ENCODE measurements at regions of chr19 and their contacts with region 1.

Region 1: DNA sequence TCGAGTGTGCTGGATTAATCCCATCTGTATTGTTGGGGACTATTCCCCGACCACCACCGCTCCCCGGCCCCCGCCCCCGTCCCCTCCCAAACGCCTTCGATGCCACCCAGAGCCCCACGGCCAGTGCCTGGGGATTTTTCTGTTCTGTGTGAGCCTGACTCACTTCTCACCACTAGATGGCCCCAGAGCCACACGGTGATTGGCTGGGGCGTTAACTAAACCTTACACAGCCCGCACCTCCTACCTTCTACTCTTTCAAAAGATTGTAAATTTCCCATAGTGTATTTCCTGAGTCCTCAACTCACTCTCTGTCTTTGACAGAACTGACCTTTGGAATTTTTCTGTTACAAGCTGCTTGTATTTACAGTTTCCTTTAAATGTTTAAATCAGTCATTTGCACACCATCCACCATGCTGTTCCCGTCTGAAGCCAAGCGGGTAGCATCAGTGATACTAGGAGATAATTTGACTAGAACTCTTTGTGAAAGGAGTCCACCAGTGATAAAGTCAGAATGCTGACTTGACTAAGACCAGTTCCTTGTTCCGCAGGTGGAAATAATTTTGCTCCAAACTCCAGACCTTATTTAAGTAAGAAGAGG is 61.4 kb downstream of the RFX2 start:
- DNase-seq: peak; percentile 70 to 85 (median 72)
- ATAC-seq: peak; percentile 91 to 98 (median 96)
- H3K4me3 ChIP-seq: peak overlapping the region in 1 of 12 donors; percentile 3
- H3K27ac ChIP-seq: peak overlapping the region in 1 of 12 donors; percentile 29
- H3K4me1 ChIP-seq: peaks cover 0 to 19% (median 9%) of the 10 kb centered on the region in 12 donors
- H3K27me3 ChIP-seq: no peaks in the 10 kb centered on the region
- CTCF ChIP-seq: peak; percentile 86 to 93 (median 90)
- POLR2A ChIP-seq: no peak

Region 2: DNA sequence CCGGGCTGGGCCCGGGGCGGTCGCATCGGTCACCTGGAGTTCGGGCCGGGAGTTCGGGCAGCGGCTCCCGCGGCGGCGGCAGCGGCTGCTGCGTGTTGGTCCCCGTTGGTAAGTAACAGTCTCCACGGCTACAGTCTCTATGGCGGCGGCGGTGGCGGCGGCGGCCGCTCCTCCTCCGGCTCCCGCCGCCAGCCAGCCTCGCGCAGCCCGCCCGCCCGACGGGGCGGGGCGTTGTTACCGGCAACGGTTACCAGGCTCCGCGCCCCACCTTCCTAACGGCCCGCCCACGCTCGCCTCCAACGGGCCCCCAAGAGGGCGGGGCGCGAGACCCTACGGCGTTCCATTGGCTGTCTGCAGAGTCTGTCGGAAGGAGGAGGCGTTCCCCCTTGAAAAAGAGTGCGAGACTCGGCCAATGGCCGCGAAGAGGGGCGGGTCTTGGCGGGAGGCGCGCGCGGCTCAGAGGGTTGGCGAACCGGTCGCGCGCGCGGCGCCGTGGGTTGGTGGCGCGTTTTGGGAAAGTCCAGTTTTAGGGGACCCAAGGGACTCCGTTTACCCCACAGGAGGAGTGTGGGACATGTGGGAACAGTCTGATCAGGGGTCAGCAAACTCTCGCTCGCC is 61.6 kb after region 1 on chr19 and contains the start of gene RFX2:
- intact Hi-C with region 1: loop called in 1 of 10 experiments (anchors 5 kb)
- DNase-seq: peak; percentile 99
- ATAC-seq: peak; percentile 99 to 100 (median 99)
- H3K4me3 ChIP-seq: peak within 1 kb of the TSS; percentile 48 to 84 (median 70)
- H3K27ac ChIP-seq: peak within 1 kb of the TSS; percentile 17 to 93 (median 84)
- H3K4me1 ChIP-seq: peaks cover 0 to 33% (median 12%) of the 10 kb centered on the region in 12 donors
- H3K27me3 ChIP-seq: no peaks in the 10 kb centered on the region
- CTCF ChIP-seq: peak in 1 of 12 donors; percentile 10
- POLR2A ChIP-seq: peak in 1 of 2 donors; percentile 70
- total RNA-seq, gene RFX2: 2.8 to 20.0 (median 5.8) TPM

Region 3: DNA sequence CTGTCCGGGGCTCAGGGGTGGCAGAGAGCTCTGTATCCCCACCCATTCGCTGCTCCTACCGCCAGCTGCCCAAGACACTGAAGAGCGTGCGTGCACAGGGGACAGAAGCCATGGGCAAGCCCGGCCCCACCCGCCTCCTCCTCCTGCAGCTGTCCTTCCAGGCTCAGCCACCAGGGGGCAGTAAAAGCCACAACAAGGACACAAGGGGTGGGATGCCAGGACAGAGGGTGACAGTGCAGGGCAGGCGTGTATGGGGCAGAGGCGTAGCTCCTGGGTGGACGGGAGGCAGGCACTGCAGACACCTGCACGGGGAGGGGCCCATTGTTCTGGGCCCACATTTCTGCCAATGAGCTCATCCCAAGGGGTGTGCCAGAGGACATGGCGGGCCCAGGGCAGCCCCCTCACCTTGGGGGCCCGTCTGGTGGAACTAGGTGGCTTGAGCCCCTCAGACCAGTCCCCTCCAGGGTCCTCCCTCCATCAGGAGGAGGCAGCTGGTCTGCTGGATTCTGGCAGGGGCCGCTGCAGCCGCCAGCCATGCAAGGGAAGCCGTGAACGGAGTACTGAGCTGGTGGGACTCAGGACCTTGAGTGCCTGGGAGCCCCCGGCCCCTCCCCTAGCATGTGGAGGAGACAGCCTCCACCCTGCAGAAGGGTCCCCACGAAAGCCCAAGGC is 169.7 kb after region 1 on chr19:
- intact Hi-C with region 1: loop called in 1 of 10 experiments (anchors 1 kb)
- DNase-seq: peak; percentile 84 to 92 (median 89)
- ATAC-seq: peak; percentile 66 to 86 (median 72)
- H3K4me3 ChIP-seq: no peak overlapping the region
- H3K27ac ChIP-seq: peak overlapping the region in 4 of 12 donors; percentile 8 to 41 (median 12)
- H3K4me1 ChIP-seq: peaks cover 8 to 63% (median 45%) of the 10 kb centered on the region in 12 donors
- H3K27me3 ChIP-seq: no peaks in the 10 kb centered on the region
- CTCF ChIP-seq: peak; percentile 93 to 99 (median 96)
- POLR2A ChIP-seq: no peak

Region 4: GRCh38 chr19:6292006-6292405 is 243.1 kb after region 1 on chr19:
- intact Hi-C with region 1: loop called in 4 of 10 experiments (anchors 5 to 10 kb)
- DNase-seq: no peak
- ATAC-seq: no peak
- H3K4me3 ChIP-seq: no peak overlapping the region
- H3K27ac ChIP-seq: no peak overlapping the region
- H3K4me1 ChIP-seq: no peaks in the 10 kb centered on the region
- H3K27me3 ChIP-seq: no peaks in the 10 kb centered on the region
- CTCF ChIP-seq: no peak
- POLR2A ChIP-seq: no peak

Region 5: GRCh38 chr19:6312018-6312417 is 263.1 kb after region 1 on chr19:
- intact Hi-C with region 1: loop called in 1 of 10 experiments (anchors 10 kb)
- DNase-seq: no peak
- ATAC-seq: no peak
- H3K4me3 ChIP-seq: no peak overlapping the region
- H3K27ac ChIP-seq: no peak overlapping the region
- H3K4me1 ChIP-seq: no peaks in the 10 kb centered on the region
- H3K27me3 ChIP-seq: peaks cover 0 to 5% (median 0%) of the 10 kb centered on the region in 9 donors
- CTCF ChIP-seq: no peak
- POLR2A ChIP-seq: no peak

Measured in heart left ventricle (tissue), 16 donors.